K562 (cell line): ENCODE measurements at regions of chr4 and their contacts with region 1.

Region 1: DNA sequence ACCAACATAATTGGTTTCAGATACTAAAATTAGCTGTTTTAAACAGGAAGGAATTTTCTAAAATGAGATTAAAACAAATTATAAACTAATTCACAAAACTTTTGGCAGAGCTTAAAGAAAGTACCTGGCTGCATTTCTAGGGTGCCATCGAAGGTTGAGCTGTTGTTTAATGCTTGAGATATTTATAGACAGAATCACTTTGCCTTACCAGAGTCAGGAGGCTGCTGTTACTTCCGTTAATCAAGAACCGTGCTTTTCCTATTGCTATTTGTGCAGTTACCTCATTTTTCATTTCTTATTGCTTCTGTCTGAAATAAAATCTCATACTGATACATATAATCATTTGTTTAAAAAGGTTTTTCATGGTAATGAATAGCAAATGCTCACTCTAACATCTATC is 242.9 kb downstream of the TECRL start:
- DNase-seq: no peak
- ATAC-seq: no peak
- H3K4me3 ChIP-seq: no peak overlapping the region
- H3K27ac ChIP-seq: no peak overlapping the region
- H3K4me1 ChIP-seq: no peaks in the 10 kb centered on the region
- H3K27me3 ChIP-seq: no peaks in the 10 kb centered on the region
- CTCF ChIP-seq: no peak
- EP300 ChIP-seq: no peak
- POLR2A ChIP-seq: no peak
- RAD21 ChIP-seq: no peak

Region 2: DNA sequence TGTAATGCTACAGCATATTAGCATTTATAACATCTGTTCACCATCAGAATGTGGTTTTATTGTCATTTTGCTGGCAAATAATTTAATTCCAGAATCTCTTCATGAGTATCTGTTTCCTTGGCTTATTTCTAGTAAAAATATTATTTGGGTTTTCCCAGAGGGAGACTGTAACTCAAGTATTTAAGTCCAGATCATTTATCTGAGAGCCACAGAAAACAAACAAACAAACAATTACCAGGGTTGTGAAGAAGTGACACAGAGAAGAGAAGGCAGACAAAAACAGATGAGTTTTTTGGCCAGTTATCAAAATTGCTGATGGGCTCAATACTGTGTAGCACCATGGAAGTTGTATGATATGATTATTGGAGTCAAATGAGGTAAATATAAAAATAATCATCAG is 272.2 kb before region 1 on chr4:
- CTCF ChIA-PET with region 1: no interaction called
- POLR2A ChIA-PET with region 1: no interaction called
- in situ Hi-C with region 1: no loop called
- intact Hi-C with region 1: no loop called
- DNase-seq: no peak
- ATAC-seq: no peak
- H3K4me3 ChIP-seq: no peak overlapping the region
- H3K27ac ChIP-seq: no peak overlapping the region
- H3K4me1 ChIP-seq: no peaks in the 10 kb centered on the region
- H3K27me3 ChIP-seq: no peaks in the 10 kb centered on the region
- CTCF ChIP-seq: no peak
- EP300 ChIP-seq: no peak
- POLR2A ChIP-seq: no peak
- RAD21 ChIP-seq: no peak

Region 3: DNA sequence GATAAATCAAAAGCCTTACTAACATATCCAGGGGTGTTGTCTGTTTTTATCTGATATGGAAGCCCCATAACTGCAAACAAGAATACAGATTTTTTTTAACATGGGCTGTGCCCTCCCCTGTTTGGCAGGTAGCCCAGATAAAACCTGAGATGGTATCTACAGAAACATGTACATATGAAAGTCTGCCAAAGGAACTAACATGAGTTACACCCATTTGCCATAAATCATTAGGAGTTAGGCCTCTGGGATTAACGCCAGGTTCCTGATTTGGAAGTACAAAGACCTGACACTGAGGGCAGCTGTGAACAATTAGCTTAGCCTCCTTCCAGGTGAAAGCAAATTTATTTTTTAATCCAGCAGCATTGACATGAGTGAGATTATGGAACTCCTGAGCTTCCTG is 21.4 kb before region 1 on chr4:
- CTCF ChIA-PET with region 1: no interaction called
- POLR2A ChIA-PET with region 1: no interaction called
- in situ Hi-C with region 1: no loop called
- intact Hi-C with region 1: loop called (anchors 1 kb)
- DNase-seq: no peak
- ATAC-seq: no peak
- H3K4me3 ChIP-seq: no peak overlapping the region
- H3K27ac ChIP-seq: no peak overlapping the region
- H3K4me1 ChIP-seq: no peaks in the 10 kb centered on the region
- H3K27me3 ChIP-seq: no peaks in the 10 kb centered on the region
- CTCF ChIP-seq: no peak
- EP300 ChIP-seq: no peak
- POLR2A ChIP-seq: no peak
- RAD21 ChIP-seq: no peak